ENCODE measurements at regions of chr6 and their contacts with region 1.

Region 1: GRCh38 chr6:7137335-7138045 is 29.7 kb downstream of the RREB1 start:
- DNase-seq: peak; percentile 83
- H3K4me3 Mint-ChIP-seq: peak overlapping the region; percentile 68
- H3K27ac Mint-ChIP-seq: peak overlapping the region; percentile 86
- H3K4me1 Mint-ChIP-seq: peaks cover 71% of the 10 kb centered on the region
- H3K27me3 Mint-ChIP-seq: no peaks in the 10 kb centered on the region

Region 2: DNA sequence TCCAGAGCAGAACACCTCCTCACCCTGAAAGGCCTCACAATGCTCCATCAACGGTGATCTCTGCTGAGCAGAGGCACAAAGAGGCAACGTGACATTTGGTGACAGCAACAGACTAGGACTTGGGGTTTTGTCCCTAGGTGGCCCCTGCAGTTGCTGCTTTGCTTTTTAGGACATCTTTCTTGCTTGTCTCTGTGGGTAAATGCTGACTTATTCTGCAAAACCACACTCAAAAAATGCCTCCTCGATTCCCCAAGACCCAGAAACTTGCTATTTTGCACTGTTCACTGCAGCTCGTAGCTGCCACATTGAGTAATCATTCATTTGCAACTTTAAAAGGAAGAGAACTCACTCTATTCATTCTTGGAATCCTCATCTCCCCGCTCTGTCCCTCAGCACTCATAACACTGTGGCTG is 339.0 kb before region 1 on chr6:
- CTCF ChIA-PET with region 1: no interaction called
- POLR2A ChIA-PET with region 1: no interaction called
- intact Hi-C with region 1: loop called (anchors 5 kb)
- DNase-seq: peak; percentile 68
- H3K4me3 Mint-ChIP-seq: no peak overlapping the region
- H3K27ac Mint-ChIP-seq: peak overlapping the region; percentile 78
- H3K4me1 Mint-ChIP-seq: peaks cover 40% of the 10 kb centered on the region
- H3K27me3 Mint-ChIP-seq: peaks cover 6% of the 10 kb centered on the region

Region 3: GRCh38 chr6:7073821-7074525 is 63.5 kb before region 1 on chr6:
- CTCF ChIA-PET with region 1: no interaction called
- POLR2A ChIA-PET with region 1: no interaction called
- intact Hi-C with region 1: no loop called
- DNase-seq: peak; percentile 87
- H3K4me3 Mint-ChIP-seq: peak overlapping the region; percentile 8
- H3K27ac Mint-ChIP-seq: no peak overlapping the region
- H3K4me1 Mint-ChIP-seq: peaks cover 14% of the 10 kb centered on the region
- H3K27me3 Mint-ChIP-seq: peaks cover 19% of the 10 kb centered on the region

Region 4: GRCh38 chr6:7148100-7148822 is 10.8 kb after region 1 on chr6:
- CTCF ChIA-PET with region 1: no interaction called
- POLR2A ChIA-PET with region 1: no interaction called
- intact Hi-C with region 1: loop called (anchors 1 kb)
- DNase-seq: no peak
- H3K4me3 Mint-ChIP-seq: no peak overlapping the region
- H3K27ac Mint-ChIP-seq: no peak overlapping the region
- H3K4me1 Mint-ChIP-seq: peaks cover 70% of the 10 kb centered on the region
- H3K27me3 Mint-ChIP-seq: no peaks in the 10 kb centered on the region

Region 5: GRCh38 chr6:7204726-7205125 is 67.2 kb after region 1 on chr6:
- CTCF ChIA-PET with region 1: no interaction called
- POLR2A ChIA-PET with region 1: no interaction called
- intact Hi-C with region 1: no loop called
- DNase-seq: no peak
- H3K4me3 Mint-ChIP-seq: no peak overlapping the region
- H3K27ac Mint-ChIP-seq: no peak overlapping the region
- H3K4me1 Mint-ChIP-seq: peaks cover 12% of the 10 kb centered on the region
- H3K27me3 Mint-ChIP-seq: no peaks in the 10 kb centered on the region